Panc1 (cell line): ENCODE measurements at regions of chr10 and their contacts with region 1.

Region 1: GRCh38 chr10:70540089-70540788 is 61.7 kb downstream of the PALD1 start:
- DNase-seq: no peak
- ATAC-seq: peak; percentile 79
- H3K4me3 ChIP-seq: no peak overlapping the region
- H3K27ac ChIP-seq: no peak overlapping the region
- H3K4me1 ChIP-seq: no peaks in the 10 kb centered on the region
- H3K27me3 ChIP-seq: no peaks in the 10 kb centered on the region
- CTCF ChIP-seq: peak; percentile 97

Region 2: DNA sequence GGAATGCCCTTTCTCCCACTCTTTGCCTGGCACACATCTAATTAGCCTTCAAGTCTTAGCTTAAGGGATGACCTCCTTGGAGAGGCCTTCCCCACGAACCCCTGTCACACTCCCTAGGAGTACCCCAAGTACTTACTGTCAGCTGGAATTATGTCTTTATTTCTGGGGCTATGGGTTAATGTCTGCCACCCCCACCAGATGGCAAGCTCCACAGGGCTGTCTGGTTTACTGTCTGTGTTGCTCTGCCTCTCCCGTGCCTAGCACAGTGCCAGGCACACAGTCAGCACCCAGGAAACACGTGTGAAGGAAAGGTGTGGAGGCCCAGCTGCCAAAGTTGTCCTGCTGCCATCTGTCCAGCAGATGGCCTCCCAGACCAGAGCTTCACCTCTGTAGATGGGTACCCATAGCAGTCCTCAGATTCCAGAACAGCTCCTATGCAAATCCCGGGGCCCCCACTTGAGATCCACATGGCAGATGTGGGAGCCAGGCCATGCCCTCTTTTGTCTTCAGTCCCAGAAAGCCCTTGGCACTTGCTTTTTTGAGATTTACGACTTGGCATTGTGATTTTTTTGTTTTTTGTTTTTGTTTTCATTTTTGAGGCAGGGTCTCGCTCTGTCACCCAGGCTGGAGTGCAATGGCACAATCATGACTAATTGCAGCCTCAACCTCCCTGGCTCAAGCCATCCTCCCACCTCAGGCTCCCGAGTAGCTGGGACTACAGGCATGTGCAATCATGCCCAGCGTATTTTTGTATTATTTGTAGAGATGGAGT is 78.8 kb before region 1 on chr10:
- CTCF ChIA-PET with region 1: interaction called, 26 read pairs
- POLR2A ChIA-PET with region 1: no interaction called
- in situ Hi-C with region 1: no loop called
- intact Hi-C with region 1: loop called (anchors 2 kb)
- DNase-seq: peak; percentile 55
- ATAC-seq: peak; percentile 86
- H3K4me3 ChIP-seq: no peak overlapping the region
- H3K27ac ChIP-seq: no peak overlapping the region
- H3K4me1 ChIP-seq: peaks cover 6% of the 10 kb centered on the region
- H3K27me3 ChIP-seq: no peaks in the 10 kb centered on the region
- CTCF ChIP-seq: peak; percentile 98

Region 3: GRCh38 chr10:70478191-70479164 is 61.8 kb before region 1 on chr10 and contains the start of gene PALD1:
- CTCF ChIA-PET with region 1: no interaction called
- POLR2A ChIA-PET with region 1: no interaction called
- in situ Hi-C with region 1: no loop called
- intact Hi-C with region 1: no loop called
- DNase-seq: no peak
- ATAC-seq: peak; percentile 72
- H3K4me3 ChIP-seq: peak within 1 kb of the TSS; percentile 46
- H3K27ac ChIP-seq: peak within 1 kb of the TSS; percentile 44; the same call in 1 of the 2 replicates
- H3K4me1 ChIP-seq: peaks cover 10% of the 10 kb centered on the region
- H3K27me3 ChIP-seq: no peaks in the 10 kb centered on the region
- CTCF ChIP-seq: no peak
- total RNA-seq, gene PALD1: 3.0 TPM

Region 4: DNA sequence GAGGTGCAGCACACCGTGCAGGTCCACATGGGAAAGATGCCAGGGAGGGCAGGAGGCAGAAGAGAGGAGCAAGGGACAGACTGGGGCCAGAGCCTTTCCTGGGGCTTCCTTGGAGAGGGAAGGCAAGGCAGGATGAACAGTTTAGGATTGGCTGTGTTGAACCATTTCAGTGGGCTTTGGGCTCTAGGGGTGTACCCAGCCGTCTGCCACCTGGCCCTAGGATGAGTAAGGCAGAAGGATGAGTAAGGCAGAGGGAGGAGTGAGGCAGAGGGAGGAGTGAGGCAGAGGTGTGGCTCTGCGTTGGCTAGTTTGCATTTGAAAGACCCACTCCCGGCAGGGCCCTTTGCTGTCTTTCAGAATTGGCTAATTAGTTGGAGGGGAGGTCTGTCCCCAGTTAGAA is 93.8 kb after region 1 on chr10:
- CTCF ChIA-PET with region 1: no interaction called
- POLR2A ChIA-PET with region 1: no interaction called
- in situ Hi-C with region 1: no loop called
- intact Hi-C with region 1: no loop called
- DNase-seq: no peak
- ATAC-seq: no peak
- H3K4me3 ChIP-seq: no peak overlapping the region
- H3K27ac ChIP-seq: no peak overlapping the region
- H3K4me1 ChIP-seq: no peaks in the 10 kb centered on the region
- H3K27me3 ChIP-seq: no peaks in the 10 kb centered on the region
- CTCF ChIP-seq: no peak

Region 5: GRCh38 chr10:70742537-70743429 is 202.5 kb after region 1 on chr10:
- CTCF ChIA-PET with region 1: no interaction called
- POLR2A ChIA-PET with region 1: no interaction called
- in situ Hi-C with region 1: no loop called
- intact Hi-C with region 1: no loop called
- DNase-seq: no peak
- ATAC-seq: no peak
- H3K4me3 ChIP-seq: no peak overlapping the region
- H3K27ac ChIP-seq: no peak overlapping the region
- H3K4me1 ChIP-seq: no peaks in the 10 kb centered on the region
- H3K27me3 ChIP-seq: peaks cover 10% of the 10 kb centered on the region
- CTCF ChIP-seq: no peak